Natural killer cell (primary cell): ENCODE measurements at regions of chr7 and their contacts with region 1.

Region 1: GRCh38 chr7:70647801-70648498 is 484.0 kb upstream of the GALNT17 start:
- DNase-seq: peak; percentile 83 to 93
- ATAC-seq: peak; percentile 81 to 92 (median 90)
- H3K4me3 ChIP-seq: no peak overlapping the region
- H3K4me3 Mint-ChIP-seq: peak overlapping the region; percentile 84
- H3K27ac ChIP-seq: peak overlapping the region; percentile 84
- H3K27ac Mint-ChIP-seq: peak overlapping the region; percentile 89 to 96
- H3K4me1 ChIP-seq: peaks cover 50% of the 10 kb centered on the region
- H3K4me1 Mint-ChIP-seq: peaks cover 50 to 55% of the 10 kb centered on the region in 2 donors
- H3K27me3 ChIP-seq: no peaks in the 10 kb centered on the region
- H3K27me3 Mint-ChIP-seq: no peaks in the 10 kb centered on the region
- CTCF ChIP-seq: no peak

Region 2: GRCh38 chr7:70060298-70061068 is 587.5 kb before region 1 on chr7:
- intact Hi-C with region 1: loop called (anchors 2 kb)
- DNase-seq: peak; percentile 28 to 34
- ATAC-seq: peak; percentile 79 to 91 (median 90)
- H3K4me3 ChIP-seq: no peak overlapping the region
- H3K4me3 Mint-ChIP-seq: peak overlapping the region; percentile 70
- H3K27ac ChIP-seq: no peak overlapping the region
- H3K27ac Mint-ChIP-seq: peak overlapping the region; percentile 63 to 73
- H3K4me1 ChIP-seq: peaks cover 18% of the 10 kb centered on the region
- H3K4me1 Mint-ChIP-seq: peaks cover 48 to 50% of the 10 kb centered on the region in 2 donors
- H3K27me3 ChIP-seq: no peaks in the 10 kb centered on the region
- H3K27me3 Mint-ChIP-seq: peaks cover 6 to 13% of the 10 kb centered on the region in 2 donors
- CTCF ChIP-seq: no peak

Region 3: GRCh38 chr7:70660154-70660818 is 12.3 kb after region 1 on chr7:
- intact Hi-C with region 1: loop called (anchors 1 kb)
- DNase-seq: peak; percentile 77 to 85
- ATAC-seq: peak; percentile 86 to 95 (median 92)
- H3K4me3 ChIP-seq: no peak overlapping the region
- H3K4me3 Mint-ChIP-seq: peak overlapping the region; percentile 71
- H3K27ac ChIP-seq: peak overlapping the region; percentile 78
- H3K27ac Mint-ChIP-seq: peak overlapping the region; percentile 81 to 89
- H3K4me1 ChIP-seq: peaks cover 38% of the 10 kb centered on the region
- H3K4me1 Mint-ChIP-seq: peaks cover 37 to 47% of the 10 kb centered on the region in 2 donors
- H3K27me3 ChIP-seq: no peaks in the 10 kb centered on the region
- H3K27me3 Mint-ChIP-seq: no peaks in the 10 kb centered on the region
- CTCF ChIP-seq: no peak

Region 4: GRCh38 chr7:70668606-70669358 is 20.8 kb after region 1 on chr7:
- intact Hi-C with region 1: loop called (anchors 2 kb)
- DNase-seq: no peak
- ATAC-seq: peak in 2 of 3 donors; percentile 40 to 41
- H3K4me3 ChIP-seq: no peak overlapping the region
- H3K4me3 Mint-ChIP-seq: no peak overlapping the region
- H3K27ac ChIP-seq: no peak overlapping the region
- H3K27ac Mint-ChIP-seq: peak overlapping the region; percentile 68 to 78
- H3K4me1 ChIP-seq: peaks cover 34% of the 10 kb centered on the region
- H3K4me1 Mint-ChIP-seq: peaks cover 25 to 36% of the 10 kb centered on the region in 2 donors
- H3K27me3 ChIP-seq: no peaks in the 10 kb centered on the region
- H3K27me3 Mint-ChIP-seq: no peaks in the 10 kb centered on the region
- CTCF ChIP-seq: no peak

Region 5: GRCh38 chr7:70678621-70679251 is 30.8 kb after region 1 on chr7:
- intact Hi-C with region 1: loop called (anchors 1 kb)
- DNase-seq: peak in 1 of 2 donors; percentile 26
- ATAC-seq: peak in 1 of 3 donors; percentile 15
- H3K4me3 ChIP-seq: no peak overlapping the region
- H3K4me3 Mint-ChIP-seq: peak overlapping the region; percentile 85
- H3K27ac ChIP-seq: peak overlapping the region; percentile 79
- H3K27ac Mint-ChIP-seq: peak overlapping the region; percentile 89 to 95
- H3K4me1 ChIP-seq: peaks cover 47% of the 10 kb centered on the region
- H3K4me1 Mint-ChIP-seq: peaks cover 70 to 84% of the 10 kb centered on the region in 2 donors
- H3K27me3 ChIP-seq: no peaks in the 10 kb centered on the region
- H3K27me3 Mint-ChIP-seq: no peaks in the 10 kb centered on the region
- CTCF ChIP-seq: no peak

Region 6: GRCh38 chr7:70849580-70850235 is 201.8 kb after region 1 on chr7:
- intact Hi-C with region 1: no loop called
- DNase-seq: no peak
- ATAC-seq: peak in 1 of 3 donors; percentile 32
- H3K4me3 ChIP-seq: no peak overlapping the region
- H3K4me3 Mint-ChIP-seq: no peak overlapping the region
- H3K27ac ChIP-seq: no peak overlapping the region
- H3K27ac Mint-ChIP-seq: no peak overlapping the region
- H3K4me1 ChIP-seq: no peaks in the 10 kb centered on the region
- H3K4me1 Mint-ChIP-seq: peaks cover 6% of the 10 kb centered on the region in 2 donors
- H3K27me3 ChIP-seq: no peaks in the 10 kb centered on the region
- H3K27me3 Mint-ChIP-seq: no peaks in the 10 kb centered on the region
- CTCF ChIP-seq: no peak